MCF 10A (cell line): ENCODE measurements at regions of chr2 and their contacts with region 1.

Region 1: DNA sequence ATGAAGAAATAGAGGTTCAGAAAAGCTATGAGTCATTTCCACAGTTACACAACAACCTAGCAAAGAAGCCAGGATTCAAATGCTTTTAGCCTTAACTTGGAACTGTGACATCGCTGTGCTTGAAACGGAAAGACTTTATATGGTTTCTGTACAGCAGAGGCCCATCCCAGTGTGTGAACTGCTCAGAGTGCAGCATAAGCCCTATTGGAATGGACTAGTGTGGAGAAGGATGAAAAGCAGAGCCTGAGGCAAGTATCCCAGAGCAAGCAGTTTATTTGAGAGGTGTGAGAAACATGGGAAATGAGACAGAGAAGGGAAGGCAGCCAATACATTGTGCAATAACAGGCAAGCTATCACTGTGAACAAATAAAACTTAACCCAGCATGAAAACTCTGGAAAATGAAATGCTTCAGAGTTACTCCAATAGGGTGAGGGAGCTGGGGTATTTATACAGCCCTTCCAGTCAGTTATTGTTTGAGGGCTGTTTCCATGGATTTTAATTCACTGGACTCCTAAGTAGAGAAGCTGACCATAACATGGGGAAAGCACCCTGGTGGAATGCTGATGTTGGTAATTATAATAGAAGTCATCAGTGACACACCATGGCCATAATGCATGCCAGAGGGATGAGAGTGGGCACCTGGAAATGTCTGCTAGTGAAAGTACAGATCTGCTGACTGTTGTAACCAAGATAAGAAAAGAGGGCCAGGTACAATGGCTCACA is 254.0 kb upstream of the POU3F3 start:
- DNase-seq: peak; percentile 97
- H3K4me3 Mint-ChIP-seq: no peak overlapping the region
- H3K27ac Mint-ChIP-seq: peak overlapping the region; percentile 74
- H3K4me1 Mint-ChIP-seq: peaks cover 12% of the 10 kb centered on the region
- H3K27me3 Mint-ChIP-seq: no peaks in the 10 kb centered on the region
- CTCF ChIP-seq: no peak

Region 2: GRCh38 chr2:104434318-104434797 is 165.6 kb before region 1 on chr2:
- CTCF ChIA-PET with region 1: no interaction called
- POLR2A ChIA-PET with region 1: no interaction called
- intact Hi-C with region 1: no loop called
- DNase-seq: peak; percentile 14
- H3K4me3 Mint-ChIP-seq: peak overlapping the region; percentile 53
- H3K27ac Mint-ChIP-seq: no peak overlapping the region
- H3K4me1 Mint-ChIP-seq: peaks cover 12% of the 10 kb centered on the region
- H3K27me3 Mint-ChIP-seq: peaks cover 44% of the 10 kb centered on the region
- CTCF ChIP-seq: no peak

Region 3: GRCh38 chr2:104487366-104487765 is 112.6 kb before region 1 on chr2:
- CTCF ChIA-PET with region 1: no interaction called
- POLR2A ChIA-PET with region 1: no interaction called
- intact Hi-C with region 1: loop called (anchors 5 kb)
- DNase-seq: peak; percentile 56
- H3K4me3 Mint-ChIP-seq: no peak overlapping the region
- H3K27ac Mint-ChIP-seq: no peak overlapping the region
- H3K4me1 Mint-ChIP-seq: no peaks in the 10 kb centered on the region
- H3K27me3 Mint-ChIP-seq: peaks cover 88% of the 10 kb centered on the region
- CTCF ChIP-seq: no peak

Region 4: DNA sequence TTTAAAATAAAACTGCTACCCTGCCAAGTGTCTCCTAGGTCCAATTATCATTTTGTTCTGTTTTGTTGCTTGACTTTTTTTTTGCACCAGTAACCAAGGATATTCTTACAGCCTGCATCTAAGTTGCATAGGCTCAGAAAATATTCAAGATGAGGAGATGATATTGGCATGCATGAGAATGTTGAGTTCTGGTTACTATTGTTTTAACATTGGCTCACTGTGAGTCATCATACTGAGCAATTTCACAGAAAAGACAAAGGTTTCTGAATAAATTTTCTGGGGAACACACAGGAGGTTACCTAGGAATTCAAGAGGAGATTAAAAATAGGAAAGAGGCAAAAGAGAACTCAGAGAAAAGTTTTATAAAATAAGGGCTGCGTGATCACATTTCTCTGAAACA is 169.1 kb after region 1 on chr2:
- CTCF ChIA-PET with region 1: no interaction called
- POLR2A ChIA-PET with region 1: no interaction called
- intact Hi-C with region 1: loop called (anchors 5 kb)
- DNase-seq: peak; percentile 55
- H3K4me3 Mint-ChIP-seq: no peak overlapping the region
- H3K27ac Mint-ChIP-seq: peak overlapping the region; percentile 63
- H3K4me1 Mint-ChIP-seq: peaks cover 9% of the 10 kb centered on the region
- H3K27me3 Mint-ChIP-seq: no peaks in the 10 kb centered on the region
- CTCF ChIP-seq: no peak